Panc1 (cell line): ENCODE measurements at regions of chr11 and their contacts with region 1.

Region 1: DNA sequence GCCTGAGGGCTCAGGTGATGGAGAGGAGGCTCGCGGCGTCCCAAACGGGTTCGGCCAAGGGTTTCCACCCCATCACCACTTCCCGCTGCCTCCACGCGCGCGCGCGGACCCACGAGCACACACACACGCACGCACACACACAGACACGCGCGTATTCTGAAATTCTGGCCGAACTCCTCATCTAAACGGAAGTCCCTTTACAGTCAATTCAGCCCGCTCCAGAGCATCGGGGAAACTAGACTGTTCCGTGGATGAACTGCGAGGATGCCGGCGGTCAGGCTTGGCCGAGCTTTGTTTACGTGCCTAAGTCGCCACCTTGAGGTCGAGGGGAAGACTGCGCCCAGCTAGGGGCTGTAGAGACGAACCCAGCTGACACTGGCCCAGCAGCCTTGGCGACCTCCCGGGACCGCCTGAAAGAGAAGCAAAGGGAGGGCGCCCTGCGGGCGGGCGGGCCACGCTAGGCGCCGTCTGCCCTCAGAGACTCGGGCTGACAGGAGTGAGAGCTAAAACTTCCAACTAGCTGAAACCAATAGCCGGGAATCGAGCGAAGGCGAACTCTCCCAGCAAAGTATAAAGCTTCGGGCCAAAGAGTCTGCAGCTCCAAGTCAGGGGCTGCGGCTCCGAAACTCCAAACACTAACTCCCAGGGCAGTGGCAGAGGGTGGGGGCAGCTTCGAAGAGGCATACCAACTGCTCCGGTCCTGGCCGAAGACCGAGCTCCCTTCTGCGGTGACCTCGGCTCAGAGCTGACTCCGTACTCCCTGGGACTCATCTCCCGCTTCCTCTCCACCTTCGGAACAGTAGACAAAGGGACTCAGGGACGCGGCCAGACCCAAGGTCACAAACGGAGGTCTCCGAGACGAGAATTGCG is 124.7 kb upstream of the C11orf58 start:
- DNase-seq: peak; percentile 41
- ATAC-seq: peak; percentile 99
- H3K4me3 ChIP-seq: peak overlapping the region; percentile 27 to 46
- H3K27ac ChIP-seq: no peak overlapping the region
- H3K4me1 ChIP-seq: peaks cover 12% of the 10 kb centered on the region
- H3K27me3 ChIP-seq: peaks cover 50% of the 10 kb centered on the region
- CTCF ChIP-seq: peak; percentile 92

Region 2: DNA sequence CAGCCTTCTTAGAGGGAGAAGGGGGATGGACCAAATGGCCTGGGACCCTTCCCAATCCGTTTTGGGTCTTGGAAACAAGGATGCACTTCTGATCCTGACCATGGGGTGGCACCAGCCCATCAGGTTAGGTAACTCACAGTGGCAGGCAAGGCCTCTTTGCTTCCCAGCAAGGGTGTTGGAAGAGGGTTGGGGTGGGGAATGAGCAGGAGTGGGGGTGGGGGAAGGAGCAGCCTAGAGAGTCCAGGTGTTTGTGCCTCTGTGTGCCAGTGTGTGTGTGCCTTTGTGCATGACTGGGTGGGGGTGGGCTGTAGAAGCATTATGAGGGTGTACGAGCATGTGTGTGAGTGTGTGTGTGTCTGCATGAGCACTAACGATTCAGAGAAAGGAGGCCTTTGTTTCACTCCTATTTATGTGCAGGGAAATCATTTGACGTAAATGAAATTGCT is 1285.9 kb before region 1 on chr11:
- CTCF ChIA-PET with region 1: no interaction called
- POLR2A ChIA-PET with region 1: no interaction called
- in situ Hi-C with region 1: no loop called
- intact Hi-C with region 1: loop called (anchors 5 kb)
- DNase-seq: no peak
- ATAC-seq: peak; percentile 74
- H3K4me3 ChIP-seq: no peak overlapping the region
- H3K27ac ChIP-seq: no peak overlapping the region
- H3K4me1 ChIP-seq: no peaks in the 10 kb centered on the region
- H3K27me3 ChIP-seq: no peaks in the 10 kb centered on the region
- CTCF ChIP-seq: peak; percentile 73

Region 3: GRCh38 chr11:15650105-15650938 is 963.4 kb before region 1 on chr11:
- CTCF ChIA-PET with region 1: interaction called, 7 read pairs
- POLR2A ChIA-PET with region 1: no interaction called
- in situ Hi-C with region 1: no loop called
- intact Hi-C with region 1: loop called (anchors 5 kb)
- DNase-seq: peak; percentile 36
- ATAC-seq: peak; percentile 99
- H3K4me3 ChIP-seq: peak overlapping the region; percentile 43 to 56
- H3K27ac ChIP-seq: peak overlapping the region; percentile 79
- H3K4me1 ChIP-seq: no peaks in the 10 kb centered on the region; the same call in 1 of the 2 replicates
- H3K27me3 ChIP-seq: no peaks in the 10 kb centered on the region
- CTCF ChIP-seq: peak; percentile 96

Region 4: GRCh38 chr11:15819679-15820286 is 794.0 kb before region 1 on chr11:
- CTCF ChIA-PET with region 1: interaction called, 6 read pairs
- POLR2A ChIA-PET with region 1: no interaction called
- in situ Hi-C with region 1: no loop called
- intact Hi-C with region 1: loop called (anchors 5 kb)
- DNase-seq: peak; percentile 27
- ATAC-seq: peak; percentile 86
- H3K4me3 ChIP-seq: no peak overlapping the region
- H3K27ac ChIP-seq: no peak overlapping the region
- H3K4me1 ChIP-seq: no peaks in the 10 kb centered on the region
- H3K27me3 ChIP-seq: no peaks in the 10 kb centered on the region; the same call in 1 of the 2 replicates
- CTCF ChIP-seq: peak; percentile 93